WTC11 (cell line): ENCODE measurements at regions of chr17 and their contacts with region 1.

Region 1: GRCh38 chr17:50534222-50534978 is 1.9 kb downstream of the EPN3 start:
- DNase-seq: peak; percentile 58
- ATAC-seq: peak; percentile 67
- H3K4me3 Mint-ChIP-seq: peak overlapping the region; percentile 87
- H3K27ac Mint-ChIP-seq: no peak overlapping the region
- H3K4me1 Mint-ChIP-seq: peaks cover 46% of the 10 kb centered on the region
- H3K27me3 Mint-ChIP-seq: peaks cover 26% of the 10 kb centered on the region
- CTCF ChIP-seq: no peak

Region 2: GRCh38 chr17:50501054-50501453 is 33.3 kb before region 1 on chr17:
- CTCF ChIA-PET with region 1: interaction called, 22 read pairs
- POLR2A ChIA-PET with region 1: interaction called, 10 read pairs
- DNase-seq: no peak
- ATAC-seq: no peak
- H3K4me3 Mint-ChIP-seq: no peak overlapping the region
- H3K27ac Mint-ChIP-seq: no peak overlapping the region
- H3K4me1 Mint-ChIP-seq: peaks cover 8% of the 10 kb centered on the region
- H3K27me3 Mint-ChIP-seq: no peaks in the 10 kb centered on the region
- CTCF ChIP-seq: peak; percentile 30; the same call in 1 of the 2 replicates

Region 3: GRCh38 chr17:50507871-50508572 is 26.4 kb before region 1 on chr17 and contains the start of gene MYCBPAP:
- CTCF ChIA-PET with region 1: interaction called, 4 read pairs
- POLR2A ChIA-PET with region 1: interaction called, 10 read pairs
- DNase-seq: peak; percentile 87
- ATAC-seq: peak; percentile 60
- H3K4me3 Mint-ChIP-seq: peak within 1 kb of the TSS; percentile 89
- H3K27ac Mint-ChIP-seq: peak within 1 kb of the TSS; percentile 78
- H3K4me1 Mint-ChIP-seq: peaks cover 30% of the 10 kb centered on the region
- H3K27me3 Mint-ChIP-seq: peaks cover 6% of the 10 kb centered on the region
- CTCF ChIP-seq: no peak
- total RNA-seq, gene MYCBPAP: 5.7 to 6.9 TPM (median 6.6 TPM) in 3 replicates

Region 4: DNA sequence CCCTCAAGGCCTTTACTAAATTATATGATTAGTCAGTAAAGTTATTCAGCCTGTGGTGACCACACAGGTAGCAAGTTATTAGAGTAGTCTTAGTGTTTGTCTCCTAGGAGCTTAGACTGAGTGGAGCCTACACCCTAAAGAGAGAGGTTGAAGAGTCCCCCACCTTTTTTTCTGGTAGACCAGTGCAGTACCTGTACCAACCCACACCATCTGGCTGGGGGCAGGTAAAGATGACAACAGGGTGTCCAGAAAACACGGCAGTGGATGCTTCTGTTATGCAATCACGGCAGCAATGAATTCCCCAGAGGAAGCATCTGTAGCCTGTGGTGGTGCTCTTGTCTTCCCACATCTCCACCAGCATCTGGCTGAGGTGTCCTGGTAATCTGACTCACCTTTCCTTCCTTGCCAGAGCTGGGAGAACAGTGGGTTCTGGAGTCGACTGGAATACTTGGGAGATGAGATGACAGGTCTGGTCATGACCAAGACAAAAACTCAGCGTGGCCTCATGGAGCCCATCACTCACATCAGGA is 15.1 kb before region 1 on chr17:
- CTCF ChIA-PET with region 1: interaction called, 17 read pairs
- POLR2A ChIA-PET with region 1: interaction called, 3 read pairs
- DNase-seq: no peak
- ATAC-seq: no peak
- H3K4me3 Mint-ChIP-seq: no peak overlapping the region
- H3K27ac Mint-ChIP-seq: no peak overlapping the region
- H3K4me1 Mint-ChIP-seq: peaks cover 15% of the 10 kb centered on the region
- H3K27me3 Mint-ChIP-seq: peaks cover 3% of the 10 kb centered on the region
- CTCF ChIP-seq: no peak